ENCODE measurements at regions of chr9 and their contacts with region 1.

Region 1: GRCh38 chr9:34252670-34253459 is 74.0 kb downstream of the UBAP1 start:
- DNase-seq: peak in 1 of 2 donors; percentile 71
- ATAC-seq: peak; percentile 15 to 20
- H3K4me3 ChIP-seq: no peak overlapping the region
- H3K27ac ChIP-seq: peak overlapping the region; percentile 86 to 98 (median 90)
- H3K4me1 ChIP-seq: peaks cover 54 to 71% of the 10 kb centered on the region in 2 donors
- H3K27me3 ChIP-seq: no peaks in the 10 kb centered on the region
- CTCF ChIP-seq: peak; percentile 81 to 97 (median 94)
- POLR2A ChIP-seq: no peak

Region 2: GRCh38 chr9:34010979-34011378 is 241.9 kb before region 1 on chr9:
- in situ Hi-C with region 1: no loop called
- intact Hi-C with region 1: loop called (anchors 10 kb)
- DNase-seq: no peak
- ATAC-seq: no peak
- H3K4me3 ChIP-seq: no peak overlapping the region
- H3K27ac ChIP-seq: no peak overlapping the region
- H3K4me1 ChIP-seq: peaks cover 0 to 4% of the 10 kb centered on the region in 2 donors
- H3K27me3 ChIP-seq: no peaks in the 10 kb centered on the region
- CTCF ChIP-seq: peak in 3 of 5 experiments; percentile 21 to 35 (median 30)
- POLR2A ChIP-seq: no peak

Region 3: DNA sequence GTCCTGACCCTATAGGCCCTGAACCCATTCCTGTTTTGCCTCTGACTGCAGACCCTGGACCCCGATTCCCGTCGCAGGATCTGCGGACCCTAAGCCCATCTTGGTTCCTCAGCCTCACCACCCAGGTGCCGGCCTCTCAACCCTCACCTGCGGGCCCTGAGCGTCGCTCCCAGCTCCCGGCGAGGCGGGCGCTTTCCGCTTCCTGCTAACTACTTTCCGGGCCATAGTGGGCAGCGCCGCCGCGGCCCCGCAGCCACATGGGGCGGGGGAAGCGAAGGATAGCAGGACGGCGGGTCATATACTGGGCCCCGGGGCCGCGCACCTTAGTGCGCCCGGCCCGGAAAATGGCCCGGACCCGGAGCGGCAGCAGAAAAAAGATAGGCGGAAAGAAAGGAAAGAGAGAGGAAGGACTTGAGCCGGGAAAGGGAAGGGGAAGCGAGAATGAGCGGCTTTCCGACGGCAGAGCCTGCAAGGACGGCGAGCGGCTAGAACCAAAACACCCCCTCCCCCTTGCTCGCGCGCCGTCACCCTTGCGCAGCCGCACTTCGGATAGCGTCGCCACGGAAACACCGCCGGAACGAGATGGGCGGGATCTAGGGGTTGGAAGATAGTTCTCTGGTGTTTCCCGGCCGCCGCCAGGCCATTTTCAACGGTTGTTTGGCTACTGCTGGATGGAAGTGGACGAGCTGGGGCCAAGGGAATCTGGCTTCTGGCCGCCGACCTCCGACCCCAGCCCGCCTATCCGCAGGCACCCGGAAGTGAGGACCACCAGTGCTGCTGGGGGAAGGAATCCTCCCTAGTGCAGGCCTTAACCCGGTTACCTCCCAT is 126.4 kb before region 1 on chr9 and contains the start of gene DCAF12:
- in situ Hi-C with region 1: loop called in 1 of 4 experiments (anchors 10 kb)
- intact Hi-C with region 1: loop called (anchors 2 kb)
- DNase-seq: peak; percentile 81 to 86
- ATAC-seq: peak; percentile 96 to 98
- H3K4me3 ChIP-seq: peak within 1 kb of the TSS; percentile 69 to 99 (median 84)
- H3K27ac ChIP-seq: peak within 1 kb of the TSS; percentile 84 to 98 (median 90)
- H3K4me1 ChIP-seq: peaks cover 30 to 31% of the 10 kb centered on the region in 2 donors
- H3K27me3 ChIP-seq: no peaks in the 10 kb centered on the region
- CTCF ChIP-seq: peak in 1 of 5 experiments; percentile 23
- POLR2A ChIP-seq: peak; percentile 66 to 80
- total RNA-seq, gene DCAF12: 19.4 to 33.7 (median 26.7) TPM

Region 4: DNA sequence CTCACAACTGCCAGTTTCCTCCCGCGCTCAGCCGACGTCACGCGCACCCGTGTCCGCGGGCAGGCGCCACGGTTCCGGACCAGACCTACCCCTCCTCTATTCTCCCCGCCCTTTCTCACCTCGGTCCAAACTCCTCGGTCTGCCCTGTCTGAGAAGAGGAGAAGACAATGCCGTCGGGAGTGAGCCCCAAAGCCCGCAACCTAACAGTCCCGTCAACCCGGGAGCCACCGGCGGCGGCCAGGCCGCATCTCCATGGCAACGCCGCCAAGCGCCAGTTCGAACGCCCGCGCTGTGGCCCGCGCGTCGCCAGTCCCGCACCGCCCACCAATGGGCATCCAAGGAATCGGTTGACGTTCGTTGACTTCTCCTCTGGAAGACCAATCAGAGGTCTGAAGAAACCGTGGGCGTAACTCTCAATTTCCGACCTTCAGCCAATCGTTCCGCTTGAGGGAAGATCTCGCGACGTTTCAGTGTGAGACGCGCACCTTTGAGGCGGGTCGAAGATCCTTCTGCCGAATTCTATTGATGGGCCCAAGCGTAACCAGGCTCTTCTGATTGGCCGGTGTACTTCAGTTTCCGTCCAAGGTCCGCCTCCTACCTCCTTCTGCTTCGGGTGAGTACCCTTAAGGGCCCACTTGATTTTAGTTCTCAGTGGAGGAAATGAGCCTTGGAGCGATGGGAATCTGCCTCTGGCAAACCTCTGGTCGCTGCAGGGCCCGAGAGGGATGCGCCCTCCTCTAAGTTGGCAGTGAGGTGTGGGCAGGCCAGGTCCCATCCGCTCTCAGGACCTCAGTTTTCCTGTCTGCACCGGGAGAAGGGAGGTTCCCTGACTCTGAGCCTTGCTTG is 76.3 kb after region 1 on chr9 and contains the starts of genes KIF24 and NUDT2:
- in situ Hi-C with region 1: no loop called
- intact Hi-C with region 1: loop called (anchors 2 kb)
- DNase-seq: peak; percentile 98 to 99
- ATAC-seq: peak; percentile 98
- H3K4me3 ChIP-seq: peak within 1 kb of the TSS; percentile 65 to 83 (median 76)
- H3K27ac ChIP-seq: peak within 1 kb of the TSS; percentile 87 to 94 (median 91)
- H3K4me1 ChIP-seq: peaks cover 19 to 21% of the 10 kb centered on the region in 2 donors
- H3K27me3 ChIP-seq: no peaks in the 10 kb centered on the region
- CTCF ChIP-seq: peak in 1 of 5 experiments; percentile 8
- POLR2A ChIP-seq: peak; percentile 49 to 90
- total RNA-seq, gene KIF24: 0.13 to 0.68 (median 0.50) TPM
- total RNA-seq, gene NUDT2: 8.2 to 19.9 (median 16.1) TPM

Region 5: GRCh38 chr9:34458013-34458958 is 205.4 kb after region 1 on chr9 and contains the starts of genes DNAI1 and FAM219A:
- in situ Hi-C with region 1: no loop called
- intact Hi-C with region 1: loop called (anchors 5 kb)
- DNase-seq: peak; percentile 98
- ATAC-seq: peak; percentile 89 to 92
- H3K4me3 ChIP-seq: peak within 1 kb of the TSS; percentile 68 to 95 (median 80)
- H3K27ac ChIP-seq: peak within 1 kb of the TSS; percentile 79 to 94 (median 90)
- H3K4me1 ChIP-seq: peaks cover 38 to 53% of the 10 kb centered on the region in 2 donors
- H3K27me3 ChIP-seq: no peaks in the 10 kb centered on the region
- CTCF ChIP-seq: no peak
- POLR2A ChIP-seq: peak; percentile 97 to 98
- total RNA-seq, gene DNAI1: 0.49 TPM in 1 of 4 donors, not detected in the others
- total RNA-seq, gene FAM219A: 29.5 to 58.4 (median 41.8) TPM

Region 6: DNA sequence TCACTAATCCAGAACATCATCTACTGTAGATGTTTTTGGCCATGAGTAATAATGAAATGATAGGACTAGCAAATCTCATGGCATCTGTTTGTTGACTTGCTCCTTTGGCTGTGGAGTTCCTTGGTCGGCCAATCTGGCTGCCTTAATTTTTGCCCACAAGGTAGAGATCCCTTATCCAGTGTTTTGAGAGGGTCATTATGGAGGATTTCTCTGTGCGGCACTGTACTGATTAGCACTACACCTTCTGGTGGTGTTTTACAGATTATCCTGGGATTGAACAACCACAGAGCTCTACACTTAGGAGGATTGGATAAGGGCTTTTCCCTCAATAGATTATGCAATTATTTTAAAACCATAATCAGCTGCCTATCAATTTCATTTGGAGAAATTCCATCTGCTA is 273.2 kb after region 1 on chr9:
- in situ Hi-C with region 1: no loop called
- intact Hi-C with region 1: no loop called
- DNase-seq: no peak
- ATAC-seq: no peak
- H3K4me3 ChIP-seq: no peak overlapping the region
- H3K27ac ChIP-seq: no peak overlapping the region
- H3K4me1 ChIP-seq: peaks cover 6 to 7% of the 10 kb centered on the region in 2 donors
- H3K27me3 ChIP-seq: no peaks in the 10 kb centered on the region
- CTCF ChIP-seq: no peak
- POLR2A ChIP-seq: no peak